ENCODE measurements at regions of chr16 and their contacts with region 1.

Region 1: DNA sequence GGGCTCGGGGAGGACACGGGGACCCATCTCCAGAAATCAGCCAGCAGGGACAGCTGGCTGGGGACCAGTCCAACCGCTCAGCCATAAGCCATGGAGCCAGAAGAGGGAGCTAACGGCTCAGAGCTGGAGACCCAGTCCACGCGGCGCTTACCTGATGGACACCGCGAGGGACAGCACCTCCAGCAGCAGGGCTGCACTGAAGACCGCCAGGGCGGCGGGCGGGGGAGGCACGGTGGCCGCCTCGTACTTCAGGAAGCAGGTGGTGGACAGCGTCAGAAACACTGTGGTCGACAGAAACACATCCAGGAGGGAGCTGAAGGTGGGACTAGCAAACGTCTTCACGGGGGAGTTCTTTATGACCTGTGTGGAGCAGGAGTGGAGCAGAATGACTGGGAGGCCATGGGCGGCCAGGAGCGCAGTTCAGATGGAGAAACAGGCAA is 102.6 kb upstream of the CREBBP start:
- DNase-seq: no peak
- H3K4me3 ChIP-seq: no peak overlapping the region
- H3K27me3 ChIP-seq: no peaks in the 10 kb centered on the region
- CTCF ChIP-seq: peak; percentile 84

Region 2: DNA sequence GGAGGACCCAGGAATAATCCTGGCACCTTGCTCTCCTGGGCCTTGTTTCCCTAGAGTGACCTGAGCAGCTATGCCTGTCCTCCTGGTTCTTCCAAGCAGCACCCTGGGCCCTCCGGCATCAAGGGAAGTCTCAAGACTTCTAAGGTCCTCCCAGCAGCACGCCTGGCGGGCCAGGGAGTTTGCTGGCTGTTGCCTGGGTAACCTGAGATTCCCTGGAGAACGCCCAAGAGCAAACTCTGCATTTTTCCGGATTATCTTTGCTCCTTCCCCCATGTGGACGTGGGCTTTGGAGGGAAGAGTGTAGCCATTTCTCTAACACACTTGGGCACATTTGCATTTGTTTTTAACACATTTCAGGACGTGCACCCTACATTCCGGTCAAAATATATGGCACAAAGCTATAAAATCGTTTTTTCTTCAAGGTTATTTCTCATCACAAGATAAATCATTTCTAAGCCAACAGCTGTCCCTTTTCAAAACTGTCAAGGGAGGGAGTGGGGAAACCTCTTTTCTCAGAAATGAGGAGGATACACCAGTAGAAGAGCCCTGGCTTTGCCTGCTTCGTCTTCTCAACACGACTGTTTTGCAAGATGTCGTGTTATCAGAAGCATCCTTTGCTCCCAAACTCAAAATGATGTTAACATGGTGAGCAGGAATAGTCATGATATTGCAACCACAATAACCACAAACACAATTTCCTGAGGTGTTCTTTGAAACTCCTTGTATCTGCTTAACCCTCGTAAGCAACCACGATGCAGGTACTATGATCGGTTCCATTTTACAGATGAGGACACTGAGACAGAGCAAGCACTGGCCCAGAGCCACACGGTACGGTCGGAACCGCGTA is 16.6 kb after region 1 on chr16:
- CTCF ChIA-PET with region 1: interaction called, 13 read pairs
- POLR2A ChIA-PET with region 1: no interaction called
- DNase-seq: peak; percentile 31
- H3K4me3 ChIP-seq: no peak overlapping the region
- H3K27me3 ChIP-seq: no peaks in the 10 kb centered on the region
- CTCF ChIP-seq: no peak

Measured in BJ (cell line).